ENCODE measurements at regions of chr4 and their contacts with region 1.

Region 1: DNA sequence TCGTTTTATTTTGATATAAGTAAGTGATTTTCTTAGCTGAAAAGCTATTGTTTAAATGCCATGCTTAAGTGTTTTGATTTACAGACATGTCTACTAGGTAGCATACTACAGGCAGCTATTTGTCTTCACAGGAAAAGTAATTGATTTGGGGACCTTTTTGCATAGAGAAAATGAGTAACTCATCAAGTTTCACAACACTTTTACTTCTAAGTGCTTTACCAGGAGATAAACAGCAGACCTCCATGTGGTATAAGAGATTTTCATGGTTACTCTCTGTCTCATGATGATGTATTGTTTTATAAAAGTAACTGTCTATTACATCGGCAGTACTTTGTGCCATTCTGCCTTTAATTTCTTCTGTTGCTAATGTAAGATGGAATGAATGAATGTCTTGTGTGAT is 28.7 kb downstream of the RBPJ start:
- DNase-seq: no peak
- H3K4me3 ChIP-seq: no peak overlapping the region
- H3K27ac ChIP-seq: no peak overlapping the region
- H3K4me1 ChIP-seq: peaks cover 0 to 1% (median 0%) of the 10 kb centered on the region in 4 experiments
- H3K27me3 ChIP-seq: no peaks in the 10 kb centered on the region

Region 2: DNA sequence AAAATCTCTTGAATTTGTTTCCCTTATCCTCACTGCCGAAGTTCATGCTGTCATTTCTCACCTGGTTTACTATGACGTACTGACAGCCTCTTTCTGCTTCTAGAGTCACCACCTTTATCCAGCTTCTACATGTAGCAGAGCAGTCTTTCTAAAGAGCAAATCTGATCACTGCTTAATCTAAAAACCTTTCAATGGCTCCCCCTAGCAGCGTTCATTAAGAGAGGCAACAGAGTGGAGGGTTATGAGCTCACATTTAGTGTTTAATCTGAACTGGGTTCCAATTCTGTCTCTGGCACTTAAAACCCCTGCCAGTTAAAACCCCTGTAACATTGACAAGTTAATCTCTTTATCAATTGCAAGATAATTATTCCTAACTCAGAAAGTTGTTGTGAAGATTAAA is 24.3 kb before region 1 on chr4:
- CTCF ChIA-PET with region 1: interaction called, 48 read pairs
- POLR2A ChIA-PET with region 1: no interaction called
- DNase-seq: peak in 1 of 3 donors; percentile 38
- H3K4me3 ChIP-seq: no peak overlapping the region
- H3K27ac ChIP-seq: no peak overlapping the region
- H3K4me1 ChIP-seq: peaks cover 10 to 17% (median 14%) of the 10 kb centered on the region in 4 experiments
- H3K27me3 ChIP-seq: no peaks in the 10 kb centered on the region